Activated CD4-positive, alpha-beta T cell treated with anti-CD3 and anti-CD28 coated beads, Interleukin-2, amount 10 ng/mL, durations not matched to agents 24 days and 14 days (primary cell): ENCODE measurements at regions of chr9 and their contacts with region 1.

Region 1: DNA sequence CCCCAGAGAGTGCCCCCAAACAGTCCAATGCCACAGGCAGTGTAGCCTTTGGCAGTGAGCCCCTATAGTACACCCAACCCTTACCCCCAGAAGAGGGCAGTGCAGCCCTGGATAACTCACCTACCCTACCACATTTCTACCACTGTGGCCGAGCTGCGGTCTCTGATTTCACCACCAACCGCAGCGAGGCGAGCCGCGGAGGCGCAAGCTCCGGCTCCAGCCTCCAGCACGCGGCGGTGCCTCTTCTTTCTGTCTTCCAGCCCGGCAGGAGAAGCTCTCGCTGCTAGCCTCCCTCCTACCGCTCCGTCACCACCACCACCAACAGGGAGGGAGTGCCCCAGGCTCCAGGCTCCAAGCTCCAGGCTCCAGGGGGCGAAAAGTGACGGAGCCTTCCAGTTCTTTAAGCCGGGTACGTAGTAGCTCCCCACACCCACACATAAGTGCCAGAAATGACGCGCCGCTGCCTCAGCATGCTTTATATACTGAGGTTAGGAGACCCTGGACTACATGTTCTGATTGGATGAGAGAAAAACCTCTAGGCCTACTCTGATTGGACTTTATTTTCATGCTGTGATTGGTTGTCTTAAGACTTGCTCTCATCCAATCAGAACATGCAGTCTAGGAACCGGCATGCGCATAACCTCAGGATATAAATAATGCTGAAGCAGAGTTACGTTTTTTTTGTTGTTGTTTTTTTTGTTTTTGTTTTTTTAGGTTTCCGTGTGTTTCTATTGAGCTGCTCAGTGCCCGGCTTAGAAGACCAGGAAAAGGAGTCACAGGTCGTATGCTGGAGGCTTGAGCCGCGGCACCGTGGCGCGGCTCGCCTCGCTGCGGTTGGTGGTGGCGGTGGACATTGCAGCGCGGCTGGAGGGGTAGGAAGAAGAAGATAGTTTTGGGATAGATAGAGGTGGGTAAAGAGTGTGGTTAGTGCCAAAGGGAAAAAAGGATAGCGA is at the start of gene PCAT7:
- DNase-seq: peak; percentile 65
- H3K4me3 Mint-ChIP-seq: no peak within 1 kb of the TSS
- H3K27ac Mint-ChIP-seq: no peak within 1 kb of the TSS
- H3K4me1 Mint-ChIP-seq: no peaks in the 10 kb centered on the region
- H3K27me3 Mint-ChIP-seq: peaks cover 25% of the 10 kb centered on the region
- total RNA-seq, gene PCAT7: not detected in 2 replicates

Region 2: DNA sequence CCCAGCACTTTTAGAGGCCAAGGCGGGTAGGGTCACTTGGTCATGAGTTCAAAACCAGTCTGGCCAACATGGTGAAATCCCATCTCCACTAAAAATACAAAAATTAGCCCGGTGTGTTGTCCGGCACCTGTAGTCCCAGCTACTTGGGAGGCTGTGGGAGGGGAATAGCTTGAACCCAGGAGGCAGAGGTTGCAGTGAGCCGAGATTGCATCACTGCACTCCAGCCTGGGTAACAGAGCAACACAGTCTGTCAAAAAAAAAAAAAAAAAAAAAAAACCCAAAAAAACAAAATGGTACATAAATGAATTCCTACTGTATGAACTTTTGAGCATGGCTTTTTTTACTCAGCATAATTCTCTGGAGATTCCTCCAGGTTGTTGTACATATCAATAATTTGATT is 37.5 kb before region 1 on chr9:
- intact Hi-C with region 1: no loop called
- DNase-seq: no peak
- H3K4me3 Mint-ChIP-seq: no peak overlapping the region
- H3K27ac Mint-ChIP-seq: no peak overlapping the region
- H3K4me1 Mint-ChIP-seq: no peaks in the 10 kb centered on the region
- H3K27me3 Mint-ChIP-seq: peaks cover 8% of the 10 kb centered on the region

Region 3: DNA sequence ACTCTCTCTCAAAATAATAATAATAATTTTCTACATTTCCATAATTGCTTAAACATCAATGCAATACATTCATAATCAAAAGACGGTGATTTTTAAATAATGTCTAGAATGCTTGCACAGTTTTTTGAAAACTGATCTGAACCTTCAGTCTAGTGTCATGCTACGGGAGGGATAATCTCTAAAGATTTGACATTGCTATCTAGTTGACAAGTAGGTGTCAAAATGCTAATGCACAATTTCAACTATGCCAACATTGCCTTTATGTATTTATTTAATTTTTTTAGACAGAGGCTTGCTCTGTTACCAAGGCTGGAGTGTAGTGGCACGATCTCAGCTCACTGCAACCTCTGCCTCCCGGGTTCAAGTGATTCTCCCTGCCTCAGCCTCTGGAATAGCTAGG is 15.8 kb before region 1 on chr9:
- intact Hi-C with region 1: no loop called
- DNase-seq: no peak
- H3K4me3 Mint-ChIP-seq: no peak overlapping the region
- H3K27ac Mint-ChIP-seq: no peak overlapping the region
- H3K4me1 Mint-ChIP-seq: no peaks in the 10 kb centered on the region
- H3K27me3 Mint-ChIP-seq: no peaks in the 10 kb centered on the region

Region 4: GRCh38 chr9:94603259-94604160 is 48.8 kb after region 1 on chr9:
- intact Hi-C with region 1: loop called (anchors 2 kb)
- DNase-seq: peak; percentile 91
- H3K4me3 Mint-ChIP-seq: no peak overlapping the region
- H3K27ac Mint-ChIP-seq: no peak overlapping the region
- H3K4me1 Mint-ChIP-seq: peaks cover 6% of the 10 kb centered on the region
- H3K27me3 Mint-ChIP-seq: peaks cover 21% of the 10 kb centered on the region